B cell (primary cell): ENCODE measurements at regions of chr17 and their contacts with region 1.

Region 1: DNA sequence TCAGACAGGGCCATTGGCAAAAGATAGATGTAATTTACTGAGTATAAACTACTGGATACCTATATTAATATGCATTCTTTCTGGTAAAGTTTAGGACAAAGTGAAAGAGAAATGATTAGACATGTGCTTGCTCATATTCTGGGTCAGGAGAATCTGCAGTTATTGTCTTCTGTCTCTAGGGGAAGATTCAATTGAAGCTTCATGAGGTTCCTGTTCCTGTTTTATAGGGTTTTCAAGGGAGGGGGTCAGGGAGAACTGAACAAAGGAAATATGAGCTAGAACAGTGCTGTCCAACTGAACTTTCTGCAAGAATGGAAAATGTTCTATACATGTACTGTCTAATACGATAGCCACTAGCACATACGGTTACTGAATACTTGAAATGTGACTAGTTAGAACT is 59.3 kb upstream of the CORO6 start:
- DNase-seq: peak; percentile 76
- ATAC-seq: peak; percentile 86
- H3K4me3 ChIP-seq: no peak overlapping the region
- H3K4me3 Mint-ChIP-seq: peak overlapping the region; percentile 11
- H3K27ac ChIP-seq: peak overlapping the region in 1 of 2 donors; percentile 58
- H3K27ac Mint-ChIP-seq: peak overlapping the region; percentile 38
- H3K4me1 ChIP-seq: peaks cover 15 to 16% of the 10 kb centered on the region in 2 donors
- H3K4me1 Mint-ChIP-seq: peaks cover 28% of the 10 kb centered on the region
- H3K27me3 ChIP-seq: no peaks in the 10 kb centered on the region
- H3K27me3 Mint-ChIP-seq: no peaks in the 10 kb centered on the region
- CTCF ChIP-seq: peak; percentile 63

Region 2: DNA sequence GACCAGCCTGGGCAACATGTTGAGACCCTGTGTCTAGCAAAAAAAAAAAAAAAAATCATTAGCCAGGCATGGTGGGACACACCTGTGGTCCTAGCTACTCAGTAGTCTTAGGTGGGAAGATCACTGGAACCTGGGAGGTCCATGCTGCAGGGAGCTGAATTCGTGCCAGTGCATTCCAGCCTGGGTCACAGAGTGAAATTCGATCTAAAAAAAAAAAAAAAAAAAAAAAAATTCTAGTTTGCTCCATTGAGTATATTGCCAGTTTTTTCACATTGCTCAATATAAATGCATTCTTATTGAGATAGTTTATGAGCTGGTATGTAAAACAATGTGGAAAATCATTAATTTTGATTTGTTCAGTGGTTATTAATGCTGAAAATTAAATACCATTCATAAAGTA is 167.3 kb before region 1 on chr17:
- CTCF ChIA-PET with region 1: no interaction called
- POLR2A ChIA-PET with region 1: no interaction called
- intact Hi-C with region 1: no loop called
- DNase-seq: no peak
- ATAC-seq: no peak
- H3K4me3 ChIP-seq: no peak overlapping the region
- H3K4me3 Mint-ChIP-seq: no peak overlapping the region
- H3K27ac ChIP-seq: no peak overlapping the region
- H3K27ac Mint-ChIP-seq: no peak overlapping the region
- H3K4me1 ChIP-seq: no peaks in the 10 kb centered on the region
- H3K4me1 Mint-ChIP-seq: no peaks in the 10 kb centered on the region
- H3K27me3 ChIP-seq: no peaks in the 10 kb centered on the region
- H3K27me3 Mint-ChIP-seq: no peaks in the 10 kb centered on the region
- CTCF ChIP-seq: no peak

Region 3: GRCh38 chr17:29705386-29705785 is 23.3 kb after region 1 on chr17:
- CTCF ChIA-PET with region 1: interaction called, 13 read pairs
- POLR2A ChIA-PET with region 1: no interaction called
- intact Hi-C with region 1: no loop called
- DNase-seq: peak; percentile 48
- ATAC-seq: no peak
- H3K4me3 ChIP-seq: peak overlapping the region in 3 of 5 experiments; percentile 11 to 15 (median 11)
- H3K4me3 Mint-ChIP-seq: peak overlapping the region; percentile 59
- H3K27ac ChIP-seq: peak overlapping the region; percentile 94 to 97
- H3K27ac Mint-ChIP-seq: peak overlapping the region; percentile 90
- H3K4me1 ChIP-seq: peaks cover 49 to 62% of the 10 kb centered on the region in 2 donors
- H3K4me1 Mint-ChIP-seq: peaks cover 56% of the 10 kb centered on the region
- H3K27me3 ChIP-seq: no peaks in the 10 kb centered on the region
- H3K27me3 Mint-ChIP-seq: no peaks in the 10 kb centered on the region
- CTCF ChIP-seq: no peak

Region 4: GRCh38 chr17:29747660-29748059 is 65.6 kb after region 1 on chr17:
- CTCF ChIA-PET with region 1: interaction called, 14 read pairs
- POLR2A ChIA-PET with region 1: no interaction called
- intact Hi-C with region 1: no loop called
- DNase-seq: no peak
- ATAC-seq: no peak
- H3K4me3 ChIP-seq: no peak overlapping the region
- H3K4me3 Mint-ChIP-seq: peak overlapping the region; percentile 30
- H3K27ac ChIP-seq: peak overlapping the region in 1 of 2 donors; percentile 73
- H3K27ac Mint-ChIP-seq: peak overlapping the region; percentile 59
- H3K4me1 ChIP-seq: peaks cover 46 to 53% of the 10 kb centered on the region in 2 donors
- H3K4me1 Mint-ChIP-seq: peaks cover 67% of the 10 kb centered on the region
- H3K27me3 ChIP-seq: no peaks in the 10 kb centered on the region
- H3K27me3 Mint-ChIP-seq: no peaks in the 10 kb centered on the region
- CTCF ChIP-seq: no peak

Region 5: GRCh38 chr17:29753845-29754439 is 71.9 kb after region 1 on chr17:
- CTCF ChIA-PET with region 1: interaction called, 12 read pairs
- POLR2A ChIA-PET with region 1: interaction called, 3 read pairs
- intact Hi-C with region 1: no loop called
- DNase-seq: peak; percentile 69
- ATAC-seq: peak; percentile 72
- H3K4me3 ChIP-seq: no peak overlapping the region
- H3K4me3 Mint-ChIP-seq: peak overlapping the region; percentile 61
- H3K27ac ChIP-seq: peak overlapping the region; percentile 55 to 77
- H3K27ac Mint-ChIP-seq: peak overlapping the region; percentile 82
- H3K4me1 ChIP-seq: peaks cover 43 to 48% of the 10 kb centered on the region in 2 donors
- H3K4me1 Mint-ChIP-seq: peaks cover 53% of the 10 kb centered on the region
- H3K27me3 ChIP-seq: no peaks in the 10 kb centered on the region
- H3K27me3 Mint-ChIP-seq: no peaks in the 10 kb centered on the region
- CTCF ChIP-seq: no peak

Region 6: DNA sequence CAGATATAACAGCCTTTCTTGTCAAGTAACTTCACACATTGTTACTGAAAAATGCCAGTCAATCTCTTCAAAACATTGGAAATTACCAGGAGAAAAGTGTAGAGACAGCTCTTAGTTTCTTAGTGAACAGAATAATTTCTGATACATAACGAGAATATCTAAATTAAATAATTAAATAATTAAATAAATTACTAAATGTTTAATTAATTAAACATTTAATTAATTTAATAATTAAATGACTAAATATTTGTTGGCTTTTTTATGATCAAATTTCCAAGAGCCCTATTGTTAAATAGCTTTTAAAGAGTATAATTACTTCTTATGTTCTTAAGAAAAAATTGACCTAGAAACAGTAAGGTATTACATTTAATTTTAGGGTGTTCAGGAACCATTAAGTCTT is 118.4 kb after region 1 on chr17:
- CTCF ChIA-PET with region 1: no interaction called
- POLR2A ChIA-PET with region 1: no interaction called
- intact Hi-C with region 1: no loop called
- DNase-seq: no peak
- ATAC-seq: no peak
- H3K4me3 ChIP-seq: no peak overlapping the region
- H3K4me3 Mint-ChIP-seq: no peak overlapping the region
- H3K27ac ChIP-seq: no peak overlapping the region
- H3K27ac Mint-ChIP-seq: no peak overlapping the region
- H3K4me1 ChIP-seq: no peaks in the 10 kb centered on the region
- H3K4me1 Mint-ChIP-seq: peaks cover 4% of the 10 kb centered on the region
- H3K27me3 ChIP-seq: no peaks in the 10 kb centered on the region
- H3K27me3 Mint-ChIP-seq: no peaks in the 10 kb centered on the region
- CTCF ChIP-seq: no peak